ENCODE measurements at regions of chr2 and their contacts with region 1.

Region 1: GRCh38 chr2:236887531-236887930 is 198.2 kb upstream of the COPS8 start:
- DNase-seq: peak; percentile 90
- H3K4me3 ChIP-seq: no peak overlapping the region
- H3K27ac ChIP-seq: peak overlapping the region; percentile 98
- H3K4me1 ChIP-seq: peaks cover 35% of the 10 kb centered on the region
- H3K27me3 ChIP-seq: no peaks in the 10 kb centered on the region
- CTCF ChIP-seq: no peak
- POLR2A ChIP-seq: no peak

Region 2: DNA sequence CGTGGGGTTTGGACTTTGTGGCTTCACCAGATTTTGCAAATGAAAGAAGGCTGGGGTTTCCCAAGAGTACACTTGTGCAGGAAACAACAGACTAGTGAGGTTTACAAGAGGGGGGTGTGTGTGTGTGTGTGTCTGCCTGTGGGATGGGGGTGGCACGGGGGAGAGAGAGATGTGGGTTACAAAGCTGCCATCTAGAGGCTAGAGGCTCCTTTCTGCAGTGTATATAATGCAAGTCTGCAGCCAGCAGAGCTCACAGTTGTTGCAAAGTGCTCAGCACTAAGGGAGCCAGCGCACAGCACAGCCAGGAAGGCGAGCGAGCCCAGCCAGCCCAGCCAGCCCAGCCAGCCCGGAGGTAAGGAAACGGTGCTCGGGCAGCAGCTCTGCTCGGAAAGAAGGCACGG is 318.0 kb before region 1 on chr2 and contains the start of gene ACKR3:
- CTCF ChIA-PET with region 1: no interaction called
- POLR2A ChIA-PET with region 1: no interaction called
- dilution Hi-C with region 1: no loop called
- intact Hi-C with region 1: loop called (anchors 2 kb)
- DNase-seq: peak; percentile 95
- H3K4me3 ChIP-seq: peak within 1 kb of the TSS; percentile 18 to 70 (median 58)
- H3K27ac ChIP-seq: peak within 1 kb of the TSS; percentile 46
- H3K4me1 ChIP-seq: peaks cover 52% of the 10 kb centered on the region
- H3K27me3 ChIP-seq: no peaks in the 10 kb centered on the region
- CTCF ChIP-seq: peak; percentile 55 to 69
- POLR2A ChIP-seq: peak; percentile 87
- total RNA-seq, gene ACKR3: 24.0 and 31.1 TPM in 2 replicates

Region 3: GRCh38 chr2:236776695-236777251 is 110.8 kb before region 1 on chr2:
- CTCF ChIA-PET with region 1: no interaction called
- POLR2A ChIA-PET with region 1: no interaction called
- dilution Hi-C with region 1: no loop called
- intact Hi-C with region 1: loop called (anchors 5 kb)
- DNase-seq: peak; percentile 82
- H3K4me3 ChIP-seq: no peak overlapping the region
- H3K27ac ChIP-seq: peak overlapping the region; percentile 72
- H3K4me1 ChIP-seq: peaks cover 15% of the 10 kb centered on the region
- H3K27me3 ChIP-seq: no peaks in the 10 kb centered on the region
- CTCF ChIP-seq: no peak
- POLR2A ChIP-seq: no peak

Region 4: GRCh38 chr2:236833501-236834073 is 53.9 kb before region 1 on chr2:
- CTCF ChIA-PET with region 1: no interaction called
- POLR2A ChIA-PET with region 1: no interaction called
- dilution Hi-C with region 1: loop called (anchors 5 kb)
- intact Hi-C with region 1: loop called (anchors 1 kb)
- DNase-seq: peak; percentile 95
- H3K4me3 ChIP-seq: no peak overlapping the region
- H3K27ac ChIP-seq: peak overlapping the region; percentile 94
- H3K4me1 ChIP-seq: peaks cover 23% of the 10 kb centered on the region
- H3K27me3 ChIP-seq: no peaks in the 10 kb centered on the region
- CTCF ChIP-seq: no peak
- POLR2A ChIP-seq: no peak

Region 5: DNA sequence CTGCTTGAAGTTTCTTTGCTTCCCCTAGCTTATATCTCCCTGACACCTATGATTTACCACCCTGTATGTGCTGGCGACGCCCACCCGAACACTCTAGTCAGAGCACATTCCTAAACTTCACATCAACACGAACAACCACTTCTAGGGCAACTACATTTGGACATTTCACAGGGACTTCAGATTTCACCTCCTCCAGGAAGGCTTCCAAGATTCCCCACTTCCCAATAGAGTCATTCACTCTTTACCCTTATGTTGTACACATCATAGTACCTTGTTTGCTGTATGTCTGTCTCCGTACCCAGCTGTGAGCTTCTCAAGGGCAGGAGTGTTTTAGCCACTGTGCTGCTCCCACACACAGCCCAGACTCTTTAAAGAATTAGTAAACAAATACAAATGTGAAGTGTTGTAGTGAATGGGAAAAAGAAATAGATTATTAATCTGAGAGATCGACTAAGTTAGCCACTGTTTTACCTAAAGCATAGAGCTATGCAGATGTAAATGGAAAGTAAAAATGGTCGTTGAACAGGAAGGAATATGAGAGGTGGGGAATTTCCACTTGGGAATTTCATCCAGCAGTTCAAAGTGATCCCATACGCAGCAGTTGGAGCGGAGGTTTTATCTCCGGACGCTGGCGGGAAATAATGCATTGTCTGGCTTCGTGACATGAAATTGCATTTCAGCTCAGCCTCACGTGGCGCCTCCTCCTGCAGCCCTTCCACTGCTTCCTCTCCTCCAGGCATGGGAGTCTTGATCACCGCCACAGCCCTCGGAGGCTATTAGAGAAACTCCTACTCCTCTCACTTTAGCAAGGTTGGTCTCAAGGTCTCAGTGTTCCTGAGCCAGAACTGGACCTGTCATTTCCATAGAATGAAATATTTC is 35.2 kb before region 1 on chr2:
- CTCF ChIA-PET with region 1: no interaction called
- POLR2A ChIA-PET with region 1: no interaction called
- dilution Hi-C with region 1: no loop called
- intact Hi-C with region 1: no loop called
- DNase-seq: peak; percentile 95
- H3K4me3 ChIP-seq: no peak overlapping the region
- H3K27ac ChIP-seq: peak overlapping the region; percentile 46
- H3K4me1 ChIP-seq: peaks cover 8% of the 10 kb centered on the region
- H3K27me3 ChIP-seq: no peaks in the 10 kb centered on the region
- CTCF ChIP-seq: no peak
- POLR2A ChIP-seq: no peak

Region 6: DNA sequence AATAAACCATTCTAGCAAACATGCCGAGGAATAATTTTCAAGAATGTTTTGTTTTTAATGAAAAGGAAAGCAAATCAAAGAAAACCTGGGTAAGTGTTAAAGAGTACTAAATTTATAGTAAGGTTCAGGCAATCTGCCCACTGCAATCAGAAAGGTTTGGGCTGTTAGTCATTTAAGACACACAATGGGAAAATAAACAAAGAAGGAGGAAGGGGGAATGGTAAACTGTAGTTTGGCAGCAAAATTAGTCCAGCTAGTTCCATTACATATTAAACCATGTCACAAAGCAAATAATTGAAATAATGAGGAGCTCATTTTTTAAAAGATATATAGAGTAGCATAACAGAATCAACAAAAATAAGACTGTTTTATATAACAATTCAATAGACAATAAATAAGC is 110.7 kb after region 1 on chr2:
- CTCF ChIA-PET with region 1: interaction called, 3 read pairs
- POLR2A ChIA-PET with region 1: interaction called, 3 read pairs
- dilution Hi-C with region 1: no loop called
- intact Hi-C with region 1: loop called (anchors 1 kb)
- DNase-seq: peak; percentile 88
- H3K4me3 ChIP-seq: peak overlapping the region in 1 of 3 experiments; percentile 5
- H3K27ac ChIP-seq: peak overlapping the region; percentile 88
- H3K4me1 ChIP-seq: peaks cover 33% of the 10 kb centered on the region
- H3K27me3 ChIP-seq: no peaks in the 10 kb centered on the region
- CTCF ChIP-seq: no peak
- POLR2A ChIP-seq: no peak

Measured in endothelial cell of umbilical vein (primary cell).